Activated naive CD4-positive, alpha-beta T cell treated with anti-CD3 and anti-CD28 coated beads for 36 hours (primary cell): ENCODE measurements at regions of chr5 and their contacts with region 1.

Region 1: DNA sequence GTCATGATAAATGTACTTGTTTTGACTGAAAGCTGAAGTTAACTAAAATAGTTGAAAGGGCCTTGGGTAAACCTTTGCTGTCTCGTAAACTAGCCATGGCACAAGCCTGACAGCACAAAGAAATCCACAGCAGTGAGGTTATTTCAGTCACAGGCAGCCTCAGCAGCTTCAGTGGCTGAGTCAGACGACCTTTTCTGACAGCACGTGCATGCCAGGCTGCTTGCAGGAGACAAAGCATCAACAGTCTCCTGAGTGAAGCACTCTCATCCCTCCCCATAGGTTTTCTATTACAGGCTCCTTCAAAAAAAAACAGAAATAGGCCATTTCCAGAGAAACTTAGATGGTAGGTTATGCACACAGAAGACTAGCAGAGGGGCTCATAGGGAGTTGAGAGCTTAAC is 34.6 kb downstream of the OXCT1 start:
- DNase-seq: peak; percentile 60
- H3K4me3 Mint-ChIP-seq: no peak overlapping the region
- H3K27ac Mint-ChIP-seq: no peak overlapping the region
- H3K4me1 Mint-ChIP-seq: peaks cover 28% of the 10 kb centered on the region
- H3K27me3 Mint-ChIP-seq: no peaks in the 10 kb centered on the region

Region 2: DNA sequence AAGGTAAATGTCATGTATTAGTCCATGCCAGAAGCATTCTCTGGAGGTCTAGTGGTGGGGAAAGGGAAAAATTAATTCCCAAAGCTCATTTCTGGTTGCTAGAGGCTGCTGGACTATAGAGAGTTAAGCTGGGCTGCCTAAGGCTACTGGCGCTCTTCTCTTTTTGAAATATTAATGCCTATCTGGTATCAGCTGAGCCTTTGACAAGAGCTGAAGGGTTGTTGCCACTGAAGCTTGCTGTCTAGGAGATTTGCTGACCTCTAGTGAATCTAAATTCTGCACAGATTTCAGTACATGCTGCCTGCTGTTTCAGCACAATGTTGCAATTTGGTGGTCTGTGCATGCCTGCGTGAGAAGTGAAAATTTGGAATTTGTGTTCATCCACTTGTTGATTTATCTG is 296.2 kb before region 1 on chr5:
- CTCF ChIA-PET with region 1: no interaction called
- intact Hi-C with region 1: no loop called
- DNase-seq: no peak
- H3K4me3 Mint-ChIP-seq: no peak overlapping the region
- H3K27ac Mint-ChIP-seq: no peak overlapping the region
- H3K4me1 Mint-ChIP-seq: no peaks in the 10 kb centered on the region
- H3K27me3 Mint-ChIP-seq: no peaks in the 10 kb centered on the region

Region 3: DNA sequence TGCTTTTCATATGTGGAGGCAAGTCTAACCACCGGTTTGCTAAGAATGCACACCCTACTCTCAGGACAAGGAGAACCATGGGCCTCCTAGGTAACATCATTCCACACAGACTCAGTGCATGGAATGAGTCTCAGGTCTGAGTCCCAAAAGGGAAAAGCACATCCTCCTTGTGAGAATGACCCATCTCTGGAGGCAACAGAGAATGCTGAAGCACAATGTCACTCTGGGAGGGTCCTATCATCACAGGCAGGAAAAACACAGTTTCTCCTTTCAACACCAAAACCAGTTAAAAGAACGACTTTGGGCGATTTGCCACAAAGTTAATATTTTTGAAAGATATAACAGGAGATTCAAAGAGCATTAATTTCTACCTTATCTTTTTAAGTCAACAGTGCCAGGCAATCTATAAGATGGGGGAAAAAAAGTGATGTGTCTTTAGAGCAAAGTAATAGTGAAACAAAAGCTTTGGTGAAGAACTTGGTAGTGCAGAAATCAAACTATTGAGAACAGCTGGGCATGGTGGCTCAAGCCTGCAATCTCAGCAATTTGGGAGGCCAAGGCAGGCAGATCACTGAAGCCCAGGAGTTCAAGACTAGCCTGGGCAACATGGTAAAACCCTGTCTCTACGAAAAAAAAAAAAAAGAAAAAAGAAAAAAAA is 62.7 kb before region 1 on chr5:
- CTCF ChIA-PET with region 1: no interaction called
- intact Hi-C with region 1: no loop called
- DNase-seq: no peak
- H3K4me3 Mint-ChIP-seq: no peak overlapping the region
- H3K27ac Mint-ChIP-seq: no peak overlapping the region
- H3K4me1 Mint-ChIP-seq: peaks cover 2% of the 10 kb centered on the region
- H3K27me3 Mint-ChIP-seq: no peaks in the 10 kb centered on the region

Region 4: DNA sequence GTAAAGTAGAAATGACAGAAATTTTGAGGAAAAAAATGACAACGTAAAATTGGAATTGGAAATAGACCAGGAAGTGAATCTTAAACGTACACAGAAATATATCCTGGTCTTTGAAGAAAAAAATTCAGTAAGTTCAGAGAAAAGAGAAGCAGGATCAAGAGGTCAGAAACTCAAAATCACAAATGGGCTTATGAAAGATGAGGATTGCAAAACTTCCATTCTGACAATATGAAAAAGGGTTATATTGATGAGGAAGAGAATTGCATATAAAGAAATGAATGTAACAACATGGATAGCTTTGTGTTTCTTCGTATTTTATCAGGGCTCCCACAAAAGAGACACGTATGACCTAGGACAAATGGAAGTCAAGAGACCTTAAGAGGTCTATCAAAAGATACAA is 23.5 kb before region 1 on chr5:
- CTCF ChIA-PET with region 1: interaction called, 3 read pairs
- intact Hi-C with region 1: loop called (anchors 2 kb)
- DNase-seq: no peak
- H3K4me3 Mint-ChIP-seq: no peak overlapping the region
- H3K27ac Mint-ChIP-seq: no peak overlapping the region
- H3K4me1 Mint-ChIP-seq: peaks cover 31% of the 10 kb centered on the region
- H3K27me3 Mint-ChIP-seq: no peaks in the 10 kb centered on the region